Dorsolateral prefrontal cortex (tissue), 120 donors: ENCODE measurements at regions of chr2 and their contacts with region 1.

Region 1: DNA sequence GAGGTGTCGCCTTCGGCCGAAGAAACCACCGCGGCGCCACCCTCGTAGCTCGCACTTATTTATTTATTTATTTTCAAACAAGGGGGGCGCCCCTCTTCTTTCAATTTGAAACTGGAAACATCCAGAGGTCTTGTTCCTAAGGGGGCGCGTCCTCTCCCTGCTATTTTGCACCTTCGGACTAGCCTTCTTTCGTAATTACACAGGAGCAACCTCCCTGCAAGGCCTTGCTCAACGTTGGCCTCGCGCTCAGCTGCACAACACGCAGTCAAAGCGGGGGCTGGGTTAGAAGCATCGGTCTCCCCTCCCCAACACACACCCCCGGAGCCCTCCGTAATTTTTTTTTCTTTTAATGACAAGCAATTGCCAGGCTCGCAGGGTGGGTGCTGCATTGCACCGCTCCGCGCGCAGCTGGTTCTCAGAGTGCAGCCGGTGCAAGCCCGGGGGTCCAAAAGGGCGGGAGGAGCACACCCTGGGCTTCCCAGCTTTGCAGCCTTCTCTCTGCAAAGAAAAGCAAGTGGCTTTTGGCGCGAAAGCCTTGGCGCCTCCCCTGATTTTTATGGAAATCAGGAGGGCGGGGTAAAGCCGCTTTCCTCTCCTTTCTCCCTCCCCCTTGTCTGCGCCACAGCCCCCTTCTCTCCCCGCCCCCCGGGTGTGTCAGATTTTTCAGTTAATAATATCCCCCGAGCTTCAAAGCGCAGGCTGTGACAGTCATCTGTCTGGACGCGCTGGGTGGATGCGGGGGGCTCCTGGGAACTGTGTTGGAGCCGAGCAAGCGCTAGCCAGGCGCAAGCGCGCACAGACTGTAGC is at the start of gene MYCN:
- DNase-seq: peak; percentile 14 to 85 (median 75)
- H3K4me3 ChIP-seq: peak within 1 kb of the TSS; percentile 50 to 90 (median 71)
- H3K27ac ChIP-seq: peak within 1 kb of the TSS; percentile 7 to 92 (median 84)
- H3K27me3 ChIP-seq: peaks cover 0 to 11% (median 0%) of the 10 kb centered on the region in 45 donors
- CTCF ChIP-seq: peak in 53 of 56 donors; percentile 25 to 96 (median 88)
- total RNA-seq, gene MYCN: 1.4 to 20.5 (median 5.9) TPM

Region 2: DNA sequence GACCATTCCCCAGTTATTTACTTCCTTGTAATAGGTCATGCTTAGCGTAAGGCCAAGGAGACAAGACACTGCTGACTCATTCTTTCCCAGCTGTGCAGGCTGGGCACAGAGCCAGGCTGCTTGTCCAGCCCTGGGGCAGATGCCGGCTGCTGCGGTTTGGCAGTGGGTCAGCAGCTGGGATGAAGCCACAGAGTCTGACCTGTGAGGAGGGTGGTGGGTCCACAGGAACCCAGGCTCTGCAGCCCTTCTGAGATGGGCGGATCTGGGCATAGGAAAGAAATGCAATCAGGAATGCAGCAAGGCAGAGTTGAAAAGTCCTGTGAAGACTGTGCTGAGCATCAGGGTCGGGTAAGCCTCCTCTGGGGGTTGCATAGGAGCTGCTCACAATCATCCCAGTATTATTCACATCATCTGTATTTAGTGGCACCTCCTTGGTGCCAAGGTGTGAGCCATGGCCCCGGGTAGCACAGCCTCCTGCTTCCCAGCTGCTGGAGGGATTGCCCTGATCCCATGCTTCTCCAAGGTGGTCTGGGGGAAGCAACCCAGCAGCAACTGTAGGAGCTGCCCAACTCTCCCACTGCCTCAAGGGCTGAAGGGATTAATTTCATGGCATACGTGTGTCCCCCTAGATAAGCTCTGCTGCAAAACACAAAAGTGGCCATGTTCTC is 209.4 kb before region 1 on chr2:
- intact Hi-C with region 1: loop called in 1 of 2 experiments (anchors 5 kb)
- DNase-seq: peak; percentile 24 to 95 (median 92)
- H3K4me3 ChIP-seq: no peak overlapping the region
- H3K27ac ChIP-seq: peak overlapping the region in 15 of 59 donors; percentile 2 to 68 (median 45)
- H3K27me3 ChIP-seq: no peaks in the 10 kb centered on the region
- CTCF ChIP-seq: peak in 4 of 56 donors; percentile 13 to 27 (median 24)

Region 3: DNA sequence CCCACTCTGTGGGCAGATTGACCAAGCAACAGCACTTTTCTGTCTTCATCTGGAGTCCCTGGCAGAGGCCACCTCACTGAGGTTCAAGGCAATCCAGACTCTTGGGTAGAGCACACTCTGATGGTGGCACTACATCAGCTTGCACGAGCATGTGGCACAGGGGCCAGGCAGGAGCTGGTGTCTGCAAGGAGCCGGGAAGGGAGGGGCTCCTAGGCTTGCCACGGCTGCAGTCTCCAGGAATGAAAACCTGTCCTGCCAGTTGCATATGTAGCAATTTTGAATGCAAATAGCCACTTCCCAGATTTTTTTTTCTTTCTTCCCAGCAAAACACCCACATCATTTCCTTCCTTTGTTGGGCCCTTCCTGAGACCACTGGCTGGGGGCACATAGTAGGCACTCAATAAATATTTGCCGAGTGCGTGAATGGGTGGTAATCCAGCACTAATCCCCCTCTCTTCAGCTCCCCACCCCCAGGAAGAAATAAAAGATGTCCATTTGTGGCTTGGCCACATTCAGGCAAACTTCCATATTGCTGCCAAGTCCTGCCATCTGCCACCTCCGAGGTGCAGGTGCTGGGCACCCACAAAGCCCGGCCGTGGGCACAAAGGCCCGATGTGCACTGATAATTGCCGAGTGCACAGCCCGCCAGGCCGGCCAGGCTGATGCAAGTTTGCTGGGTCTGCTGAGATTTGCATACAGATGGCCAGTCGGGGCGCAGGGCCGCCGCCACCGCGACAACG is 72.7 kb after region 1 on chr2:
- intact Hi-C with region 1: loop called in 1 of 2 experiments (anchors 2 kb)
- DNase-seq: peak in 8 of 10 donors; percentile 19 to 68 (median 52)
- H3K4me3 ChIP-seq: peak overlapping the region in 49 of 59 donors; percentile 2 to 59 (median 36)
- H3K27ac ChIP-seq: peak overlapping the region in 54 of 59 donors; percentile 2 to 90 (median 78)
- H3K27me3 ChIP-seq: peaks cover 0 to 16% (median 0%) of the 10 kb centered on the region in 45 donors
- CTCF ChIP-seq: peak in 2 of 56 donors; percentile 9 to 14

Region 4: GRCh38 chr2:16079610-16080009 is 139.6 kb after region 1 on chr2:
- intact Hi-C with region 1: no loop called
- DNase-seq: no peak
- H3K4me3 ChIP-seq: no peak overlapping the region
- H3K27ac ChIP-seq: no peak overlapping the region
- H3K27me3 ChIP-seq: peaks cover 0 to 4% (median 0%) of the 10 kb centered on the region in 45 donors
- CTCF ChIP-seq: no peak

Region 5: DNA sequence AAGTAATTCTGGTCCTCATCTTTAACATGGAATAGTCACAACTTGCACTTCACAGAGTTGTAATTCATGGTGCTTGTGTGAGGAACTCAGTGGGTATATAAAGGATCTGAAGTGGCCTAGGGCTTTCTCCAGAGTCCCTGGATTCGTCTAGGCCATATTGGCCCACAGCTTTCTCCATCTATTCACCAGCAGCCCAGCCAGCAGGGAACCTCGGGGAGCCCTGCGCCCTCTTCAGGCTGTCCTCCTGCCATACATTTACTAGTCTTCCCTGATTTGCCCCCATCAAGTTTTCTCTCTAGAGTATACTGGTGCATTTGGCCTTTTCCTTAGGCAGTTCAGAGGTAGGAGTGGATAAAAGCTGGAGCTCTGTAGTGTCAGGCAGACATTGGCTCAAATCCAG is 278.6 kb after region 1 on chr2:
- intact Hi-C with region 1: loop called (anchors 5 kb)
- DNase-seq: no peak
- H3K4me3 ChIP-seq: no peak overlapping the region
- H3K27ac ChIP-seq: no peak overlapping the region
- H3K27me3 ChIP-seq: peaks cover 0 to 6% (median 0%) of the 10 kb centered on the region in 45 donors
- CTCF ChIP-seq: peak in 30 of 56 donors; percentile 10 to 53 (median 32)

Region 6: DNA sequence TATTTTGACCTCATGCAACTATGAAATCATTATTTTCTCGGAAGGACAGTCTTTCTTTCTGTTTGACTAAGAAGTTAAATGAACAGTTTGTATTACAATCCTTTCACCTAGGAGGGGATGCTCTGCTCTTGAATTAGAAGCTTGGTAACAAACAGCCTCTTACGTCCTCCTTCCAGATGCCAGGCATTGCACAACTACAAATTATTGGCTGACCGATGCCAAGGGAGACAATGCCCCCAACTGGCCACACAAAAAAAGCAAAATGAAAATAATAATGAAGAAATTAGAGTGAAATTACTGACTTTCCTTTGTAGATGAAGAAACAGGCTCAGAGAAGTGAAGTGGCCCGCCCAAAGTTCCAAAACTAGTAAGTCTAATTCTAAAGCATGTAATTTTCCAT is 547.6 kb after region 1 on chr2:
- intact Hi-C with region 1: loop called in 1 of 2 experiments (anchors 5 kb)
- DNase-seq: peak in 1 of 10 donors; percentile 12
- H3K4me3 ChIP-seq: no peak overlapping the region
- H3K27ac ChIP-seq: no peak overlapping the region
- H3K27me3 ChIP-seq: peaks cover 0 to 9% (median 0%) of the 10 kb centered on the region in 45 donors
- CTCF ChIP-seq: peak in 54 of 56 donors; percentile 19 to 67 (median 48)